ENCODE measurements at regions of chr4 and their contacts with region 1.

Region 1: DNA sequence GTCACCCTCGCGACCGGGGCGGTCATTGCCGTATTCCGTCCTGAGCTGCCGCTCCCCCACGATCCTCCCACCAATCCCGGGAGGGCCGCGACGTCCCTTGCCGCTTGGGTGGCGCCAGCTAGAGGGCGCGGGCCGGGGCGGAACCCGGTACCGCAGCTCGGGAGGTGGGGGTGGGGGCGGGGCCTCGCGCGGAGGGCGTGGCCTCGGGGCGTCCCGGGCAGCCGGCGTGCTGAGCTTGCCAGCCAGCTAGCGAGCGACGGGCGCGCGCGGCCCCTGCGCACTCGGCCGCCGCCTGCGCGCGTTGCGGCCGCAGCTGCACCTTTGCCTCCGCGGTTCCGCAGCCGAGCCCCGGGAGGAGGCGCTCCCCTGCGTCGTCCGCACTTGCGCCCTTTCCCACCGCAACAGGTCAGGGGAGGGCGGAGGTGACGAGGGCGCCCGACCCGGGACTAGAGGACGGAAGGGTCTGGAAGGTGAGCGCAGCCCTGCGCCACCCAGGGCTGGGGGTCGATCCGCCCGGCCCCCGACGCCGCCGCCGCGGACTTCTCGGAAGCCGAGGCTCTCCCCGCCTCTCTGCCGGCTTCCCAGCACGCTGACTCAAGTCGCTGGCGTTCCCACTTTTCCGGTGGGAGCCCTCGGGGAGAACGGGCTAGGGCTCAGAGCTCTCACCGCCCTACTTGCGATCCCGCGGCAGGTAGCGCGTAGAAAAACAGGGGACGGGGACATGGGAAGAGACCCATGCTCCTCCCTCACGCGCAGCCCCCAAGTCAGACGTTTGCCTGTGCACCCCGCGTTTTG is at the start of gene AFF1:
- DNase-seq: peak; percentile 85 to 90 (median 87)
- H3K4me3 ChIP-seq: peak within 1 kb of the TSS; percentile 70 to 80
- H3K4me3 Mint-ChIP-seq: peak within 1 kb of the TSS; percentile 89 to 97 (median 94)
- H3K27ac ChIP-seq: peak within 1 kb of the TSS; percentile 84
- H3K27ac Mint-ChIP-seq: peak within 1 kb of the TSS; percentile 94 to 98 (median 97)
- H3K4me1 ChIP-seq: peaks cover 48% of the 10 kb centered on the region
- H3K4me1 Mint-ChIP-seq: peaks cover 38 to 58% (median 46%) of the 10 kb centered on the region in 4 donors
- H3K27me3 ChIP-seq: no peaks in the 10 kb centered on the region
- H3K27me3 Mint-ChIP-seq: no peaks in the 10 kb centered on the region
- total RNA-seq, gene AFF1: 105 to 108 TPM

Region 2: DNA sequence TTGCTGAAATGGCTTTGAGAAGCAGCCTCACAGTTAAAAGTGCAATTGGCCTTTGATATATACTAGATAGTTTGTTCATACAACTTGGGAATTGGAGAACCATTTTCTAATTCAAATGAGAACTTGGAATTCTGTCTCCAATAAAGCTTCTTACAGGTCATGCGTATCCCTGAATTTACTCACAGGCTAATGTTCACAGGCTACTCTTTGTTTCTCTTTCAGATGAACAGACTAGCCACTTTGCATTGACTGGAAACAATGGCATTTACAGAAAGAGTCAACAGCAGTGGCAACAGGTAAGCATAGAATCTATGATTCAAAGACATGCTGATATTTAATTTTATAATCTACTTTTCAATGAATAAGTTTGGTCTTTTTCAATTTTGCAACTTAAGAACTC is 13.3 kb after region 1 on chr4:
- CTCF ChIA-PET with region 1: interaction called, 9 read pairs
- POLR2A ChIA-PET with region 1: interaction called, 25 read pairs
- intact Hi-C with region 1: no loop called
- DNase-seq: no peak
- H3K4me3 ChIP-seq: no peak overlapping the region
- H3K4me3 Mint-ChIP-seq: no peak overlapping the region
- H3K27ac ChIP-seq: no peak overlapping the region
- H3K27ac Mint-ChIP-seq: peak overlapping the region in 1 of 7 donors; percentile 7
- H3K4me1 ChIP-seq: peaks cover 24% of the 10 kb centered on the region
- H3K4me1 Mint-ChIP-seq: peaks cover 36 to 57% (median 41%) of the 10 kb centered on the region in 4 donors
- H3K27me3 ChIP-seq: no peaks in the 10 kb centered on the region
- H3K27me3 Mint-ChIP-seq: no peaks in the 10 kb centered on the region

Region 3: DNA sequence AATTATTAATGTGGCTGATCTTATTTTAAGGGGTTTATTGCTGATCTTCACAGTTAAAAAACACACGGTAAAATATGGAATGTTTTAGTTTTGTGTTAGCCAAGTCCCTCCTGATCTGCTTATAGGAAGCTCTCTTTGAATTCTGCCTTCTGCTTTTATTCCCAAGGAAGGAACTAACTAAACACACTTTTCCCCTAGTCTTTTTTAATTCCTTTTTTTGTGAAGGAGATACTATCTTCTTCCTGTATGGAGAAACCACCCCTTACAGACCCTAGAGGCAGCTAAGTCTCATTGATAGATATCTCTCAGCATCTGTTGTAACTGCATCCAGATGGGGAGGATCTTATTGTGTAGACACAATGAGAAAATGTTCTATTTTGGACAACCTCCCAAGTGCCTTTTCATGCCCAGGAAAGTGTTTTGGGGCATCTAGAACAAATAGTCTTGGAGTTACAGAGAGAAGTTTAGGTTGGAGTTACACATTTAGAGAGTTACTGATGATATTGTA is 64.2 kb after region 1 on chr4:
- CTCF ChIA-PET with region 1: interaction called, 99 read pairs
- POLR2A ChIA-PET with region 1: interaction called, 376 read pairs
- intact Hi-C with region 1: no loop called
- DNase-seq: no peak
- H3K4me3 ChIP-seq: no peak overlapping the region
- H3K4me3 Mint-ChIP-seq: peak overlapping the region in 3 of 8 donors; percentile 38 to 57 (median 45)
- H3K27ac ChIP-seq: peak overlapping the region; percentile 1
- H3K27ac Mint-ChIP-seq: peak overlapping the region; percentile 25 to 72 (median 62)
- H3K4me1 ChIP-seq: peaks cover 27% of the 10 kb centered on the region
- H3K4me1 Mint-ChIP-seq: peaks cover 31 to 48% (median 42%) of the 10 kb centered on the region in 4 donors
- H3K27me3 ChIP-seq: no peaks in the 10 kb centered on the region
- H3K27me3 Mint-ChIP-seq: no peaks in the 10 kb centered on the region

Region 4: DNA sequence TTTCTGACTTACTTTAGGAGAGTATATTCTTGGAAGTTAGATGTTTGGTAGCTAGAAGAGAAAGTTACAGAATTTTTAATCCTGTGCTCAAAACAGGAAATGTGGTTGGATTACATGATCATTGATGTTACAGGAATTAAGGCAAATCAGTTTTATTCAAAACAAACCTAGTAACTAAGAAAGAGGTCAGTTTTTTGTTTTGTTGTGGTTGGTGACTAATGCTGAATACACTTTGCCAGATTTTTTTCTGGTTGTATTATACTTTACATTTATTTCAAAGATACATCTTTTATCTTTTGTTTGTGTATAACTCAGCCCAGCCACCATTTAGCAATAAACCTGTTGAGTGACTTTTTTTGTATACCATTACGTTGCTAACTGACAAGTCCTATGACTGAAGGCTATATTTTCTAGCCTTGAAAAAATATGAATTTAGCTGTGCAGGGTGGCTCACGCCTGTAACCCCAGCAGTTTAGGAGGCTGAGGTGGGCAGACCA is 168.8 kb after region 1 on chr4:
- CTCF ChIA-PET with region 1: interaction called, 18 read pairs
- POLR2A ChIA-PET with region 1: interaction called, 38 read pairs
- intact Hi-C with region 1: loop called (anchors 2 kb)
- DNase-seq: peak; percentile 51 to 84 (median 80)
- H3K4me3 ChIP-seq: no peak overlapping the region
- H3K4me3 Mint-ChIP-seq: peak overlapping the region; percentile 30 to 82 (median 75)
- H3K27ac ChIP-seq: peak overlapping the region; percentile 51
- H3K27ac Mint-ChIP-seq: peak overlapping the region; percentile 91 to 97 (median 96)
- H3K4me1 ChIP-seq: peaks cover 48% of the 10 kb centered on the region
- H3K4me1 Mint-ChIP-seq: peaks cover 51 to 67% (median 56%) of the 10 kb centered on the region in 4 donors
- H3K27me3 ChIP-seq: no peaks in the 10 kb centered on the region
- H3K27me3 Mint-ChIP-seq: no peaks in the 10 kb centered on the region

Region 5: GRCh38 chr4:87399148-87399547 is 464.2 kb after region 1 on chr4:
- CTCF ChIA-PET with region 1: no interaction called
- POLR2A ChIA-PET with region 1: no interaction called
- intact Hi-C with region 1: no loop called
- DNase-seq: no peak
- H3K4me3 ChIP-seq: no peak overlapping the region
- H3K4me3 Mint-ChIP-seq: no peak overlapping the region
- H3K27ac ChIP-seq: no peak overlapping the region
- H3K27ac Mint-ChIP-seq: no peak overlapping the region
- H3K4me1 ChIP-seq: no peaks in the 10 kb centered on the region
- H3K4me1 Mint-ChIP-seq: no peaks in the 10 kb centered on the region
- H3K27me3 ChIP-seq: no peaks in the 10 kb centered on the region
- H3K27me3 Mint-ChIP-seq: no peaks in the 10 kb centered on the region

Region 6: DNA sequence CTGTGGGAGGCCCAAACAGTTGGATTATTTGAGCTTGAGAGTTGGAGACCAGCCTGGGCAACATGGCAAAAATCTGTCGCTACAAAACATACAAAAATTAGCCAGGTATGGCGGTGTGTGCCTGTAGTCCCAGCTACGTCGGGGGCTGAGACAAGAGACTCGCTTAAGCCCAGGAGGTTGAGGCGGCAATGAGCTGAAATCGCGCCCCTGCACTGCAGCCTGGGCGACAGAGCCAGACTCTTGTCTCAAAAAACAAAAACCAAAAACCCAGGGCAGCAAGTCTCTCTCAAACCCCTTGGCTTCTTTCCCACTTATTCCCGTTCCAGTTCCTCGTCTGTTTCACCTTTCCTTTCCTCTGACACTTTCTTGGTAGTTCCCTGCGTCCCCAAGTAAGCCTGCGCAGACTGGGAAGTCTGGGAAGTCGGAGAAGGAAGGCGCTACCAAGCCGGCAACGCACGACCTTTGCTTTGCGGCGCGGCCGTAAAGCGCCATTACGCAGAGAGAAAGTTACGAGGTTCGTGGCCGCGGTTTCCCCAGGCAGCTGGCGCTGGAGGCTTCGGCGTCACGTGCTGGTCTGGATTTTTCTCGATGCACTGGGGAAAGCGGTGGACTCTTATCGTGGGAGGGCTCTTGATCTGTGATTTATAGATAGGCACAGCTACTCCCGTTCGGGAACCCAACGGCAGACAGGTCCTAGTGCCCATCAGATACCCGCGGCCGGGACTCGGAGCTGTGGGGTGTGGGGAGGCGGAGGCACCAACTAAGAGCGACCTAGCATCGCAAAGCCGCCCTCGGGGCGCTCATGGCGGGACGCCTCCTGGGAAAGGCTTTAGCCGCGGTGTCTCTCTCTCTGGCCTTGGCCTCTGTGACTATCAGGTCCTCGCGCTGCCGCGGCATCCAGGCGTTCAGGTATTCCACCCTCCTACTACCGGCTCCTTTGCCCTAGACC is 487.4 kb after region 1 on chr4 and contains the start of gene NUDT9:
- CTCF ChIA-PET with region 1: no interaction called
- POLR2A ChIA-PET with region 1: interaction called, 4 read pairs
- intact Hi-C with region 1: loop called (anchors 1 kb)
- DNase-seq: peak; percentile 88 to 93 (median 91)
- H3K4me3 ChIP-seq: peak within 1 kb of the TSS; percentile 80 to 93
- H3K4me3 Mint-ChIP-seq: peak within 1 kb of the TSS; percentile 96 to 99 (median 99)
- H3K27ac ChIP-seq: peak within 1 kb of the TSS; percentile 82
- H3K27ac Mint-ChIP-seq: peak within 1 kb of the TSS; percentile 98 to 100 (median 99)
- H3K4me1 ChIP-seq: peaks cover 33% of the 10 kb centered on the region
- H3K4me1 Mint-ChIP-seq: peaks cover 14 to 50% (median 34%) of the 10 kb centered on the region in 4 donors
- H3K27me3 ChIP-seq: no peaks in the 10 kb centered on the region
- H3K27me3 Mint-ChIP-seq: no peaks in the 10 kb centered on the region
- total RNA-seq, gene NUDT9: 16.7 to 18.3 TPM

Measured in CD4-positive, alpha-beta memory T cell (primary cell).